ENCODE measurements at regions of chrX and their contacts with region 1.

Region 1: GRCh38 chrX:17812763-17813162 is 48.3 kb downstream of the RAI2 start:
- H3K4me3 ChIP-seq: no peak overlapping the region
- H3K27ac ChIP-seq: no peak overlapping the region
- H3K4me1 ChIP-seq: no peaks in the 10 kb centered on the region
- CTCF ChIP-seq: peak; percentile 69

Region 2: DNA sequence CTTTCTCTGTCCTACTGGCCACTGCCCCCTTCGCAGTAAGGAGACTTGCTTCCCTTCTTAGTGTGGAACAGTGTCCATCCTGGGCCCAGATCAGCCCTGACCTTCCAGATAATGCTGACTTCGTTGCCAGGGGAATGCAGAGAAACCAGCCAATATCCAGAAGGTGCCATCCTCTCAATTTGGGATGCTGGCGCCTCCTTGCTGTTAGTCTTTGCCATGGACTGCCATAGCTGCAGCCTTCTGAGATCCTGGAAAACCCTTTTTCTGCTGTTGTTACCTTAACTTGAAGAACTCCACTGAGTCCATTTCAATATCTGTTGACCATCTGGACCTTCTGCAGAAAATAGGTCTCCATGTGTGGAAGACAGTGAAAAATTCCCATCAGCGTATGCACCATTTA is 26.5 kb after region 1 on chrX:
- CTCF ChIA-PET with region 1: interaction called, 12 read pairs
- POLR2A ChIA-PET with region 1: no interaction called
- H3K4me3 ChIP-seq: no peak overlapping the region
- H3K27ac ChIP-seq: no peak overlapping the region
- H3K4me1 ChIP-seq: 0 out of 2 replicates have a peak, but pooled peaks cover 2% of the 10 kb centered on the region
- CTCF ChIP-seq: no peak

Region 3: GRCh38 chrX:17944833-17945497 is 132.2 kb after region 1 on chrX:
- CTCF ChIA-PET with region 1: interaction called, 11 read pairs
- POLR2A ChIA-PET with region 1: no interaction called
- H3K4me3 ChIP-seq: no peak overlapping the region
- H3K27ac ChIP-seq: no peak overlapping the region
- H3K4me1 ChIP-seq: no peaks in the 10 kb centered on the region
- CTCF ChIP-seq: no peak

Region 4: GRCh38 chrX:18210470-18210869 is 397.7 kb after region 1 on chrX:
- CTCF ChIA-PET with region 1: interaction called, 21 read pairs
- POLR2A ChIA-PET with region 1: no interaction called
- H3K4me3 ChIP-seq: no peak overlapping the region
- H3K27ac ChIP-seq: no peak overlapping the region
- H3K4me1 ChIP-seq: no peaks in the 10 kb centered on the region
- CTCF ChIP-seq: no peak

Region 5: DNA sequence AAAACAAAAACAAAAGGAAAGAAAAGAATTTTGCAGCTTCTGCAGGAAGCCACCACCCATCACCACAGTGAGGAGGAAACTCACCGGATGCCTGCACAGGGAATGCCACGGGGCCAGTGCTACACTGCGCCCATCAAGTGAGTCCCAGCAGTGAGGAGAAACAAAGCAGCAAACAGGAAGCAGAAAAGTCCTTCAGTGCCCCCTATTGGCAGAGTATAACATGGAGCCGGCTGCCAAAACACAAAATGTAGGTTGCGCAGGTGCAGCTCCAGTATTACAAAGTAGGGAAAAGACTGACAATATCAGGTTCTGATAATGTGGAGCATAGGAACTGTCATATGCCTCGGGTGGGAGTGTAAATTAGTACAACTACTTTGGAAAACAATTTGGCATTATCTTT is 565.0 kb after region 1 on chrX:
- CTCF ChIA-PET with region 1: interaction called, 13 read pairs
- POLR2A ChIA-PET with region 1: no interaction called
- H3K4me3 ChIP-seq: no peak overlapping the region
- H3K27ac ChIP-seq: no peak overlapping the region
- H3K4me1 ChIP-seq: no peaks in the 10 kb centered on the region
- CTCF ChIP-seq: 0 out of 2 replicates have a peak, but pooled peaks have one; percentile 40